ENCODE measurements at regions of chr12 and their contacts with region 1.

Region 1: DNA sequence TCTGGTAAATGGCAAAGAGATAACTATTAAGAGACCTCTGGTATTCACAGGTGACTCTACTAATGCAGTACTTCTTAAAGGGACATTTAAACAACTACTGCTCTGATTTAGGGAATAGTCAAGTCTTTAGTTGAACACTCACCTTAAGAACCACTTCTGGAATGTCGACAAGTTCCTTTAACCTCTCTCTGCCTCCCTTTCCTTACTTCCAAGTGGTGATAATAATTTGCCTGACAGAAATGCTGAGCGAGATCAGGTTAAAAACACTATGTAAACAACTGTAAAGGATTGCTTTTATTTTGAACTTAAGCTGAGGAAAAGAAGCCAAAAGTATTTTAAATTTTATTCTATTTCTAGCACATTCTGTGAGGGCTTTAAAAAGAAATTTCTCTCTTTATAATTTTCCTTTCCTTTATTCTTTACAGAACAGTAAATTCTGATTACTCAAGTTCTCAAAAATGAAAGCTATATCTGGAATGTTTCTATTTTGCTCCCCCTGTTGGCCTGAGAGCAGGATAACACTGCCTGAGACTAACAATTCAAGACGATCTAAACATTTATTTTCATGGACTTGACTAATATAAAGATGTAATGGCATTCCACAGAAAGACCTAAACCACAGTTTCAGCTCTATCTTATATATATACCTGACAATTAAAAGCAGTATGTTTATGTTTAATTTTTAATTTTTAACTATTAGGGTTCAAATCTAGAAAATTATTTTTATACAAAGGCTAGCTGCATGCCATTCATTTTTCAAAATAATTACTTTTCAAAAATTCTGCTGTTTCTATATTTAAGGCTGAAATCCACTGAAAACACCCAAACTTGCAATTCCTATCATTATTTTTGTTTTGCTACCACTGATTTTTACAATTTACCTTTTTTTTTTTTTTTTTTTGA is 29.2 kb downstream of the ZCCHC8 start:
- DNase-seq: no peak
- ATAC-seq: peak; percentile 53
- H3K4me3 Mint-ChIP-seq: no peak overlapping the region
- H3K27ac Mint-ChIP-seq: peak overlapping the region; percentile 32
- H3K4me1 Mint-ChIP-seq: peaks cover 30% of the 10 kb centered on the region
- H3K27me3 Mint-ChIP-seq: no peaks in the 10 kb centered on the region
- CTCF ChIP-seq: peak; percentile 84

Region 2: GRCh38 chr12:122421821-122422729 is 49.5 kb before region 1 on chr12 and contains the start of gene CLIP1:
- CTCF ChIA-PET with region 1: interaction called, 29 read pairs
- POLR2A ChIA-PET with region 1: interaction called, 4 read pairs
- intact Hi-C with region 1: loop called (anchors 2 kb)
- DNase-seq: peak; percentile 62
- ATAC-seq: peak; percentile 78
- H3K4me3 Mint-ChIP-seq: peak within 1 kb of the TSS; percentile 94
- H3K27ac Mint-ChIP-seq: peak within 1 kb of the TSS; percentile 87
- H3K4me1 Mint-ChIP-seq: peaks cover 31% of the 10 kb centered on the region
- H3K27me3 Mint-ChIP-seq: no peaks in the 10 kb centered on the region
- CTCF ChIP-seq: peak; percentile 60
- total RNA-seq, gene CLIP1: 29.4 to 32.4 TPM

Region 3: DNA sequence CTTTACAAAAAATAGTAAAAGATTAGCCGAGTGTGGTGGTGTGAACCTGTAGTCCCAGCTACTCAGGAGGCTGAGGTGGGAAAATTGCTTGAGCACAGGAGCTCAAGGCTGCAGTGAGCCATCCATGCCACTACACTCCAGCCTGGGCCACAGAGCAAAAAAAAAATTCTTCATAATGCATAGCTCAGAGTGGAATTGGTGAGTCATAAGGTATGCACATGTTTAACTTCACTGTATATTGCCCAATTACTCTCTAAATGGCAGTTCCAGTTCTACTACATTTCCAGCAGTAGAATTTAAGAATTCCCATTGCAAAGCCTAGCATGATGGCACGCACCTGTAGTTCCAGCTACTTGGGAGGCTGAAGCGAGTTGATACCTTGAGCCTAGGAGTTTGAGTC is 22.2 kb before region 1 on chr12:
- CTCF ChIA-PET with region 1: interaction called, 26 read pairs
- POLR2A ChIA-PET with region 1: interaction called, 3 read pairs
- intact Hi-C with region 1: no loop called
- DNase-seq: peak; percentile 35
- ATAC-seq: peak; percentile 59
- H3K4me3 Mint-ChIP-seq: no peak overlapping the region
- H3K27ac Mint-ChIP-seq: no peak overlapping the region
- H3K4me1 Mint-ChIP-seq: peaks cover 30% of the 10 kb centered on the region
- H3K27me3 Mint-ChIP-seq: no peaks in the 10 kb centered on the region
- CTCF ChIP-seq: no peak

Measured in activated CD8-positive, alpha-beta T cell treated with anti-CD3 and anti-CD28 coated beads for 36 hours (primary cell).